Cardiac septum (tissue), 1 donor: ENCODE measurements at regions of chr11 and their contacts with region 1.

Region 1: DNA sequence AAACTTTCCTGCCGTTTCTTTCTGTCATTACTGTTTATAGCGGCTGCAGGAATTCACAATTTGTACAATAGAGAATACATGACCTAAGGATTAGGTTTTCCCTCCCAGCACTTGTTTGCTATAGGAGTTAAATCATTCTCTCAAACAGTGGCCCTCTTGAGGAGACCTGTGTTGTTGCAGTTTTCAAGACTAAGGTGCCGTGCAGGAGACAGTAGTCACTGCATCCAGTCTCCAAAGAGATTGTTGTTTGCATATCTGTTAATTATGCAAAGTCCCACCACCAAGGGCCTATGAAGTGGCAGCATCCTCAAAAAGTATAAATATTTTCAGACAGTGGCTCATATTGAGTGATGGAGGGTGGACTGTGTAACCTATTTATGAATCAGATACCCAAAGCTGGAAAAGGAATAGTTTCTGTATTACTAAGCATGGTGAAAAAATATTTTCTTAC is 2.3 kb downstream of the PRSS23 start:
- DNase-seq: no peak

Region 2: DNA sequence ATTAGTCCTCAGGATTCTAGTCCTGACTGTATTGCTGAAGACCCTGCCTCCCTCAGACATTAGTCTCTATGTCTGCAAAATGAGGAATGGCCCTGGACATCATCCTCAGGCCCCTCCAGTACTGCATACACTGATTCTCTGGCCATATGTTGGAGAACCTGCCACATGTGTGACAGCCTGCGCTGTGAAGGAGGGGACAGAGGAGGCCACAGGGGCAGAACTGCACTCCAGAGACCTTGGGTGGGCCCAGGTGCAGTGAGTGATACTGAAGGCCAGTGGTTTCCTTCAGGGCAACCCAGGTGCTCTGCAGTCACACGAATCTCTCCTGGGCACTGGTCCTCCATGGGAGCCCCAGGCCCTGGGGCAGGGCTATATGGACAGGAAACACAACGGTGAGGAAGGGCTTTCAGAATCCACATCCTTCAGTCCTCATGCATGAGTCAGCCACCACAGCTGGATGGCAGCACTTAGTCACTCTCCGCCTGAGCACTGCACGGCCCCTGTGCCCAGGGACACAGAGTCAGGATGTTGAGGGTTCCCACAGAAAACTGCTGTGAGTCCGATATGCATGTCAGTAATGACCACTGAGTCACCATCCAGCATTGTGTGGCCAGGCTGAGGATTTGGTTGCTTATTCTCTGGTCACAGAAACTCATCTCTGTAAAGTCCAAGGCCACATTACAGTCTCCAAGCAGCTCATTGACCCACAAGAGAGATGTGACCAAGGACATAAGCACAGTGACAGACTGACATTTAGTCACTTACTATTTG is 169.9 kb before region 1 on chr11:
- intact Hi-C with region 1: loop called (anchors 5 kb)
- DNase-seq: no peak

Region 3: DNA sequence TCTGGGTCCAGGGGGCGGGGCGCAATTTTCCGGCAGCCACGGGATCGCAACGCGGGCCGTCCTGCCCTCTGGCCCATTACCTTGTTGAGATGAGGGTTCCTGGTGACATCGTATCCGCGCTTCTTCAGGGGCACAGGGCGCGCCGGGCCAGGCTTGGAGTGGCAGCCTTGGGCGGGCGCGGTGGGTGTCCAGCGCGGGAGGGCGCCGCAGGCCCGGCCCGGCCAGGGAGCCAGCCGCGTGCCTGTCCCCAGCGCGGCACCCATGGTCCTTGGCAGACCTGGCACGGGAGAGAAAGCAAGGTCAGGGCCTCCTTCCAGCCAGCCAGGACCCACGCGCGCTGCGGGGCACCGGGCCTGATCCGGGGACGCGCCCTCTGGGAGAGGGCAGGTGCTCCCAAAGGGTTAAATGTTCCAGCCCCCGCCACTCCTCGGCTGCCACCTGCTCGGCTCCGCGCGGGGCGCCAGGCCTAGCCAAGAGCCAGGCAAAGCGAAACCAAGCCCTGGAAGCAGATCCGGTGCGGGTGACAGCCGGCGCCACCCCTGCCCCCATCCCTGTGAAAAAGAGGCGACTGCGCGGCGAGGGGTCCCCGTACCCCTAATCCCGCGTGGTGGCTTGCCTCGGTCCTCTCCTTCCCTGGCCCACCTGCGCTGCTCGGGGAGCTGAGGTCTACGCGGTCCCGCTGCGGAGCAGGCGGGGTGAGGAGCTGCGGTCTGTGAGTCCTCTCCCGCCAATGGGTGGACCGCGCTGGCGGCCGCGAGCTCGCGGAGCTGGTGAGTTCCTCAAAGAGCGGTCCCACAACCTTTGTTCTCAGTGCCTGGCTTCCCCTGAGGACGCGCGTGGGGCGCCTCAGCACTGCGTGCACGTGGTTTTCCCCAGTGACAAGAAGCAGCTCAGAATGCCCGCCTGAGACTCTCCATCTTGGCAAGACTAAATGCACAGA is 130.7 kb before region 1 on chr11 and contains the start of gene ME3:
- intact Hi-C with region 1: loop called (anchors 5 kb)
- DNase-seq: peak; percentile 91
- total RNA-seq, gene ME3: 19.9 TPM